HepG2 (cell line): ENCODE measurements at regions of chr14 and their contacts with region 1.

Region 1: DNA sequence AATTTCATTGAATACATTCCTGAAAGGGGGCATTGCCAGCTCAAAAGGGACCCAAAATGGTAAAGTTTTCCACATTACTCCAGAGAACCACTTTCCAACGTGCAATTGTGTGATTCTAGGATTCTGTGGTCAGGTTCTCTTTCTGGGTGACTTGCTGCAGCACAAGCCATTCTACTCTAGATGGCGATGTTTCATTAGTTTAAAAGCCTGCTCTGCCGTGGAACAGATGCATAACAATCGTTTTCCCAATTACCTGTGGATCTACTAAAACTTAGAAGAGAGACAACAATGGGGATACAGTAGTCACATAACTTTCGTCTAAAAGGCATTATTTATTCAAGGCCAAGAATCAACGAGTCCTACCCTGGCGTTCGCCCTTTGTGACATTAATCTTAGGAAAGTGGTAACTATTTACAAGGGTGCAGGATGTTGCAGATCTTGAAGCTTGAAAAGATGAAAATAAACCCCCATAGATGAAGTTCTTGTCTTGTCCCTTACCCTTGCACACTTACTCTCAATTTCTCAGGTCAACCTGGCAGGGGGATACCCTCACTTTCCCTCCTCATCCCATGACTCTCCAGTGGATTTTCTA is 400.9 kb downstream of the SNAPC1 start:
- DNase-seq: peak; percentile 18
- ATAC-seq: peak; percentile 85
- H3K4me3 ChIP-seq: no peak overlapping the region
- H3K27ac ChIP-seq: no peak overlapping the region
- H3K4me1 ChIP-seq: no peaks in the 10 kb centered on the region
- H3K27me3 ChIP-seq: 0 out of 5 replicates have a peak, but pooled peaks cover 0 to 5% of the 10 kb centered on the region in 2 experiments
- CTCF ChIP-seq: peak; percentile 82
- EP300 ChIP-seq: no peak
- POLR2A ChIP-seq: no peak
- RAD21 ChIP-seq: peak; percentile 68

Region 2: DNA sequence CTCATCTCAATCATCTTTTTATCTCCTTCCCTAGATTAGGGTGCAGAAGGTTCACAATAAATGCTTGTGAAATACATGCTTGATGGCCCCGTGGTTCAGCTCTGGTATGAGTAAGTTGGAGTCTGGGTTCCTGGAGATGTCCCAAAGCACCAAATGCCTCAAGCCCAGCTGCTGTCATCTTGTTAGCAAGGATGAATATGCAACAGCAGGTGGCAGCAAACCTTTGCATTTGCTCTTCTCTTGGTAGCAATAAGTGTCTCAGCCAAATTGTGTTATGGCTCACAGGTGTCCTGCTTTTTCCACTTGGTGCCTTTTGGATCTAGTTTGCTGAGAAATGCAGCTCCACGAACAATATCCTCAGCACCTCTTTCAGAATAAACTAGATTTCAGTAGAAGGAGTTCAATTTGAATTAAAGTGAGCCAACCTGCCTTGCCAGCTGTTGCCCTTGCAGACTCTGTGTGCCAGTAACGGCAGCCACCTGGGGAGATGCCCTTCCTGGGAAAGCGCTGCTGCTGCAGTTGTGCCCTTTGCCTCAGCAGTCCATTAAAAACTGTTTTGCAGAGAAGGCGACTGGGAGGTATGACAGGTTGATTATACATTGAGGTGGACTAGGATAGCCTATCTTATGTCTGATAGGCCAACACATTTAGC is 16.4 kb after region 1 on chr14:
- CTCF ChIA-PET with region 1: no interaction called
- POLR2A ChIA-PET with region 1: no interaction called
- in situ Hi-C with region 1: no loop called
- intact Hi-C with region 1: no loop called
- DNase-seq: peak; percentile 48
- ATAC-seq: peak; percentile 84
- H3K4me3 ChIP-seq: no peak overlapping the region
- H3K27ac ChIP-seq: no peak overlapping the region
- H3K4me1 ChIP-seq: no peaks in the 10 kb centered on the region
- H3K27me3 ChIP-seq: no peaks in the 10 kb centered on the region
- CTCF ChIP-seq: peak; percentile 81
- EP300 ChIP-seq: no peak
- POLR2A ChIP-seq: no peak
- RAD21 ChIP-seq: 0 out of 2 replicates have a peak, but pooled peaks have one; percentile 45

Region 3: GRCh38 chr14:62189698-62190097 is 26.6 kb after region 1 on chr14:
- CTCF ChIA-PET with region 1: no interaction called
- POLR2A ChIA-PET with region 1: no interaction called
- in situ Hi-C with region 1: no loop called
- intact Hi-C with region 1: no loop called
- DNase-seq: no peak
- ATAC-seq: no peak
- H3K4me3 ChIP-seq: no peak overlapping the region
- H3K27ac ChIP-seq: no peak overlapping the region
- H3K4me1 ChIP-seq: no peaks in the 10 kb centered on the region
- H3K27me3 ChIP-seq: no peaks in the 10 kb centered on the region; a peak in 1 of 5 replicates
- CTCF ChIP-seq: no peak
- EP300 ChIP-seq: no peak
- POLR2A ChIP-seq: no peak
- RAD21 ChIP-seq: no peak

Region 4: DNA sequence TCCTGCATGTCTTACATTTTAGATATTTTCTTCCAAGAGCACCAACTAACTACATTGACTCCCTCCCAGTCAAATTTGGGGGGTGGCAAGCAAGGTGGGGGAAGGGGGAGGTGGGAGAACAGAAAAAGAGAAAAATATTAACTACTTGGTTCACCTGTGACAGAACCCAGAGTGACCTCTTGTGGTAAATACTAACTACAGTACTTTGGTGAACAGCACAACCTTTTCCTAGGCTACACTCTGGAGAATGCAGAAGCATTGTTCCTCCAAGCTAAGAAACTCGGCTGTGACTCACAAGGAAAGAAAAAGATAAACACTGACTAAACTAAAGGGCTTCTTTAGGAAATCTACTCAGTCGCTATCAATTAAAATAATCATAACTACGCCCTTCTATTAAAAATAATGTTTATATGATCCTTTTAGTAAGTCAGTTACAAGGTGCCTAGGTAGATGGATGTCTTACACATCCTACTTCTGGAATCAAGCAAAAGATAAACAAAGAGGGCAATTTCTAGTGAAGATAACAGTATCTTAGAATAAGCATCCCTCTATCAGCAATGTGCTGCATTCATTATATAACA is 876.8 kb after region 1 on chr14:
- CTCF ChIA-PET with region 1: interaction called, 7 read pairs
- POLR2A ChIA-PET with region 1: no interaction called
- in situ Hi-C with region 1: loop called (anchors 10 kb)
- intact Hi-C with region 1: loop called (anchors 1 kb)
- DNase-seq: peak; percentile 31
- ATAC-seq: peak; percentile 80
- H3K4me3 ChIP-seq: no peak overlapping the region
- H3K27ac ChIP-seq: no peak overlapping the region
- H3K4me1 ChIP-seq: no peaks in the 10 kb centered on the region
- H3K27me3 ChIP-seq: peaks cover 2 to 8% of the 10 kb centered on the region in 2 experiments; a peak in 2 of 5 replicates
- CTCF ChIP-seq: peak; percentile 57
- EP300 ChIP-seq: no peak
- POLR2A ChIP-seq: no peak
- RAD21 ChIP-seq: no peak

Region 5: GRCh38 chr14:63044994-63045611 is 882.0 kb after region 1 on chr14 and contains the start of gene KCNH5:
- CTCF ChIA-PET with region 1: interaction called, 7 read pairs
- POLR2A ChIA-PET with region 1: no interaction called
- in situ Hi-C with region 1: loop called (anchors 10 kb)
- intact Hi-C with region 1: loop called (anchors 1 kb)
- DNase-seq: no peak
- ATAC-seq: peak; percentile 87
- H3K4me3 ChIP-seq: peak within 1 kb of the TSS; percentile 26 to 68 (median 40); a peak in 4 of 6 replicates
- H3K27ac ChIP-seq: no peak within 1 kb of the TSS
- H3K4me1 ChIP-seq: peaks cover 17% of the 10 kb centered on the region
- H3K27me3 ChIP-seq: peaks cover 9 to 26% of the 10 kb centered on the region in 2 experiments; a peak in 4 of 5 replicates
- CTCF ChIP-seq: no peak
- EP300 ChIP-seq: no peak
- POLR2A ChIP-seq: no peak
- RAD21 ChIP-seq: no peak
- total RNA-seq, gene KCNH5: not detected in 2 replicates

Region 6: DNA sequence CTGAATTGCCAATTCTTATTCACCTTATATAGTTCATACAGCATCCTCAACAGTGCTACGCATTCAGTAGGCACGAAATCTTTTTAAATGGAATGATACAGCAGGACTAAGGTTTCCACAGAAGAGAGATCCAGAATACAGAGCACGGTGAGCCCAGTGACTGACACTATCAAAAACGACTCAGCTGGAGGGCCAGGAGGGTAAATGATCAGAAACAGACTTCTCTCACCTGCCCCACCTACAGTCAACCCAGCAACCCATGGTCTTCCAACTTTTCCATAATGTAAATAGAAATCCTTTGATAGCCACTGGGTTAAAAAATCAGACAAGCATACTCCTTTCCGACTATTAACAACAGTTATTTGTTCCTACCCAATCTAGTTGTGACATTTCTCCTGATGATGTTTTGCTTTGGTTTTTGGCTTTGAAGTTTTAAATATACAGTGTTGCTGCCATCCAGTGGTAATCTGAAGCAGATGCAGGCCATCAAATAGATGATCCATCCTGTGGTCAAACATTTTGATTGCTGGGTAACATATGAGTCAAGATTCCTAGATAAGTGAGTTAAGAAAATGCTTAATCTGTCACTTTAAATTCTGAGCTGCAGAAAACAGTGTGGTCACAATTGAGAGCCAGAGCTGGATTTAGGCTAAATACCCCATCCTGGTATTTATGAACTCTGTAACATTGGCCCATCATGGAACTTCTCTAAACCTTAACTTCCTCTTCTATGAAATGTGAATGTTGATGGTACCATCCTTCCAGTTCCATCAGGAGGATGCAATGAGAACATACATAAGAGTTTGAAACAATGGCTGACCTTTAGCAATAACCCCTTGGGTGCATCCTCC is 1113.6 kb after region 1 on chr14:
- CTCF ChIA-PET with region 1: interaction called, 17 read pairs
- POLR2A ChIA-PET with region 1: no interaction called
- in situ Hi-C with region 1: loop called (anchors 5 kb)
- intact Hi-C with region 1: loop called (anchors 1 kb)
- DNase-seq: peak; percentile 17
- ATAC-seq: peak; percentile 62
- H3K4me3 ChIP-seq: no peak overlapping the region
- H3K27ac ChIP-seq: no peak overlapping the region
- H3K4me1 ChIP-seq: no peaks in the 10 kb centered on the region
- H3K27me3 ChIP-seq: no peaks in the 10 kb centered on the region; a peak in 1 of 5 replicates
- CTCF ChIP-seq: peak; percentile 76
- EP300 ChIP-seq: no peak
- POLR2A ChIP-seq: no peak
- RAD21 ChIP-seq: peak; percentile 71

Region 7: DNA sequence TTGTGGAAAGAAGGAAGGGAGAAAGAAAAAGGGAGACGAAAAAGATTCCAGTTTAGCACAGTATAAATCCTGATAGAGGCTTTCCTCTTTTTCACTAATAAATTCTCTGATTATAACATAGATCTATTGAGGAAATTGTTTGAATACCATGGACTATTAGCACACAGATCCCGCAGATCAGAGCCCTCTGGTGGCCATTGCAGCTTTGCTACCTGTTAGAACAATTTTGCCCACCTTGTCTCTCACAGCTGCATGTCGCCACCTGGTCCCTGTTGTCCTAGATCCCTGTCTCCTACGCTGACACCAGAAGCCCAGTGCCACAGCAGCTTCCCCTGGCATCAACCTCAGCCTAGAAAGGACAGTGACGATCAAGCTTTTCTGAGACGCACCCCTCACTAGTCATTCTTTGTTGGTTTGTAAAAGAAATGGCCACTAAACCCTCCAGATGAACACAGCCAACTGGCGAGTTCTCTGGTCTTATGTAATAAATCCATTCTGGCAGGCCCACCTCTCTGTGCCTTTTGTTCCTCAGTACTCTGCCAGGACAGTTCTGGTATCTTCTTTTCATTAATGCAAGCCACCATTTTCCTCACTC is 1145.7 kb after region 1 on chr14:
- CTCF ChIA-PET with region 1: interaction called, 14 read pairs
- POLR2A ChIA-PET with region 1: no interaction called
- in situ Hi-C with region 1: no loop called
- intact Hi-C with region 1: loop called (anchors 1 kb)
- DNase-seq: peak; percentile 40
- ATAC-seq: peak; percentile 90
- H3K4me3 ChIP-seq: no peak overlapping the region
- H3K27ac ChIP-seq: no peak overlapping the region
- H3K4me1 ChIP-seq: no peaks in the 10 kb centered on the region
- H3K27me3 ChIP-seq: peaks cover 0 to 17% of the 10 kb centered on the region in 2 experiments; a peak in 2 of 5 replicates
- CTCF ChIP-seq: peak; percentile 58
- EP300 ChIP-seq: no peak
- POLR2A ChIP-seq: no peak
- RAD21 ChIP-seq: no peak